Panc1 (cell line): ENCODE measurements at regions of chr3 and their contacts with region 1.

Region 1: DNA sequence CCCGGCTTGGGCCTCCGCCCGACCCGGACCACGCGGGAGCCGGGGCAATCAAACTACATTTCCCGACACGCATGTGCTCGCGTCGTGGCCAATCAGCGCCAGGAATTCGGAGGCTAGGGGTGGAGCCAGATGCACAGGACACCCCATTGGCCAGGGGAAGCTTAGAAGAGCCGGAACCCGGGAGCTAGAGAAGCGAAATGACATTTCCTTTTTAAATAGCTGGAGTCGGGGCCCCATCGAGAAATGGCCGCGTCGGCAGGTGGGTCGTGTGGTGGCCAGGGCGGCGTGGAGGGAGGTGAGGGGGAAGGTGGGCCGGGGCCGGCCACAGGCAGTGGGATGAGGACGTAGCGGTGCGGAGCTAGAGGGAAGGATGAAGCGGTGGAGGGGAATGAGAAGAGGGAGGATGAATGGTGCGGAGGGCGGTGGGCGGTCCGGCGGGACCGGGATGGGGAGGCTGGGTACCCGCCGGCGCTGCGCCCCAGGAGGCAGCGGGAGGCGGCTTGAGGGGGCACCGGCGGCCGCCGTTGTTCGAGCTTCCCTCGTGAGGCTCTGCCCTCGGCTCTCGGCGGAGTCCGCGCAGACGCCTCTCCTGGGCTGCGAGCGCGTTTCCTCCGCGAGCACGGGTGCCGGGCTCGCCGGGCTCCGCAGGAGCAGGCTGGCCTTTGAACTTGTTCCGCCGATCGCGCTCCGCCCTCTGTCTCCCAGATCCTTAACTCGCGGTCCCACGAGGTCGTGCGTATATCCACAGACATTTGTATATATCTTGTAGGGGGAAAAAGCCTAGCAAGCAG is at the start of gene KBTBD8:
- DNase-seq: peak; percentile 95
- ATAC-seq: peak; percentile 99
- H3K4me3 ChIP-seq: peak within 1 kb of the TSS; percentile 64 to 78
- H3K27ac ChIP-seq: no peak within 1 kb of the TSS
- H3K4me1 ChIP-seq: 0 out of 2 replicates have a peak, but pooled peaks cover 2% of the 10 kb centered on the region
- H3K27me3 ChIP-seq: no peaks in the 10 kb centered on the region
- CTCF ChIP-seq: no peak
- total RNA-seq, gene KBTBD8: 0.98 TPM

Region 2: GRCh38 chr3:68963891-68964290 is 1965.6 kb after region 1 on chr3:
- CTCF ChIA-PET with region 1: interaction called, 11 read pairs
- POLR2A ChIA-PET with region 1: no interaction called
- in situ Hi-C with region 1: no loop called
- intact Hi-C with region 1: no loop called
- DNase-seq: no peak
- ATAC-seq: no peak
- H3K4me3 ChIP-seq: no peak overlapping the region
- H3K27ac ChIP-seq: no peak overlapping the region
- H3K4me1 ChIP-seq: no peaks in the 10 kb centered on the region
- H3K27me3 ChIP-seq: no peaks in the 10 kb centered on the region; the same call in 1 of the 2 replicates
- CTCF ChIP-seq: no peak